ENCODE measurements at regions of chr6 and their contacts with region 1.

Region 1: GRCh38 chr6:33410050-33410710 is 634 bp upstream of the PHF1 start:
- DNase-seq: peak; percentile 98
- ATAC-seq: peak; percentile 74
- H3K4me3 ChIP-seq: peak overlapping the region; percentile 63 to 91 (median 84)
- H3K4me3 Mint-ChIP-seq: peak overlapping the region; percentile 87
- H3K27ac ChIP-seq: peak overlapping the region; percentile 96 to 98
- H3K27ac Mint-ChIP-seq: peak overlapping the region; percentile 94
- H3K4me1 ChIP-seq: peaks cover 37 to 52% of the 10 kb centered on the region in 2 donors
- H3K4me1 Mint-ChIP-seq: peaks cover 47% of the 10 kb centered on the region
- H3K27me3 ChIP-seq: no peaks in the 10 kb centered on the region
- H3K27me3 Mint-ChIP-seq: no peaks in the 10 kb centered on the region
- CTCF ChIP-seq: no peak

Region 2: GRCh38 chr6:31752739-31753319 is 1657.4 kb before region 1 on chr6:
- CTCF ChIA-PET with region 1: no interaction called
- POLR2A ChIA-PET with region 1: no interaction called
- intact Hi-C with region 1: no loop called
- DNase-seq: no peak
- ATAC-seq: no peak
- H3K4me3 ChIP-seq: no peak overlapping the region
- H3K4me3 Mint-ChIP-seq: no peak overlapping the region
- H3K27ac ChIP-seq: no peak overlapping the region
- H3K27ac Mint-ChIP-seq: no peak overlapping the region
- H3K4me1 ChIP-seq: no peaks in the 10 kb centered on the region
- H3K4me1 Mint-ChIP-seq: no peaks in the 10 kb centered on the region
- H3K27me3 ChIP-seq: no peaks in the 10 kb centered on the region
- H3K27me3 Mint-ChIP-seq: no peaks in the 10 kb centered on the region
- CTCF ChIP-seq: no peak

Region 3: GRCh38 chr6:33288921-33289748 is 121.0 kb before region 1 on chr6 and contains the starts of genes PFDN6 and WDR46:
- CTCF ChIA-PET with region 1: no interaction called
- POLR2A ChIA-PET with region 1: no interaction called
- intact Hi-C with region 1: loop called (anchors 1 kb)
- DNase-seq: peak; percentile 93
- ATAC-seq: peak; percentile 96
- H3K4me3 ChIP-seq: peak within 1 kb of the TSS; percentile 78 to 99 (median 86)
- H3K4me3 Mint-ChIP-seq: peak within 1 kb of the TSS; percentile 93
- H3K27ac ChIP-seq: peak within 1 kb of the TSS; percentile 42 to 68
- H3K27ac Mint-ChIP-seq: peak within 1 kb of the TSS; percentile 86
- H3K4me1 ChIP-seq: peaks cover 19 to 25% of the 10 kb centered on the region in 2 donors
- H3K4me1 Mint-ChIP-seq: peaks cover 38% of the 10 kb centered on the region
- H3K27me3 ChIP-seq: no peaks in the 10 kb centered on the region
- H3K27me3 Mint-ChIP-seq: no peaks in the 10 kb centered on the region
- CTCF ChIP-seq: no peak
- total RNA-seq, gene PFDN6: 44.7 and 51.1 TPM in 2 replicates
- total RNA-seq, gene WDR46: 66.4 and 77.2 TPM in 2 replicates

Region 4: DNA sequence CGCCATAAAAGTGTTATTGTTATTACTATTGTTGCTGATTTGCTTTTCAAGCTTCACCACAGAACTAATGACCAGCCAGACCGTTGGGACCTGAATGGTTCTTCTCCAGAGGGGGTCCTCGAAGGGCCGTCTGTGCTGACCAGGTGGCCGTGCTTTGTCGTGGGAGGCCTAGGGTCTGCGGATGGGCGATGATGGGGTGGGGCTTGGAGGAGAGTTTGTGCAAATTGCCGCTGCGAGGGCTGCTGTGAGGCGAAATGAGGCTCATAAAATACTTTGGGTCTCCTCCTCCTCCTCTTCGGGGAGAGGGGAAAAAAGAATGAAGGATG is 86.6 kb before region 1 on chr6:
- CTCF ChIA-PET with region 1: no interaction called
- POLR2A ChIA-PET with region 1: interaction called, 10 read pairs
- intact Hi-C with region 1: loop called (anchors 1 kb)
- DNase-seq: no peak
- ATAC-seq: no peak
- H3K4me3 ChIP-seq: peak overlapping the region; percentile 72 to 93 (median 85)
- H3K4me3 Mint-ChIP-seq: peak overlapping the region; percentile 91
- H3K27ac ChIP-seq: peak overlapping the region; percentile 85 to 95
- H3K27ac Mint-ChIP-seq: peak overlapping the region; percentile 93
- H3K4me1 ChIP-seq: peaks cover 43 to 63% of the 10 kb centered on the region in 2 donors
- H3K4me1 Mint-ChIP-seq: peaks cover 59% of the 10 kb centered on the region
- H3K27me3 ChIP-seq: no peaks in the 10 kb centered on the region
- H3K27me3 Mint-ChIP-seq: no peaks in the 10 kb centered on the region
- CTCF ChIP-seq: no peak

Region 5: DNA sequence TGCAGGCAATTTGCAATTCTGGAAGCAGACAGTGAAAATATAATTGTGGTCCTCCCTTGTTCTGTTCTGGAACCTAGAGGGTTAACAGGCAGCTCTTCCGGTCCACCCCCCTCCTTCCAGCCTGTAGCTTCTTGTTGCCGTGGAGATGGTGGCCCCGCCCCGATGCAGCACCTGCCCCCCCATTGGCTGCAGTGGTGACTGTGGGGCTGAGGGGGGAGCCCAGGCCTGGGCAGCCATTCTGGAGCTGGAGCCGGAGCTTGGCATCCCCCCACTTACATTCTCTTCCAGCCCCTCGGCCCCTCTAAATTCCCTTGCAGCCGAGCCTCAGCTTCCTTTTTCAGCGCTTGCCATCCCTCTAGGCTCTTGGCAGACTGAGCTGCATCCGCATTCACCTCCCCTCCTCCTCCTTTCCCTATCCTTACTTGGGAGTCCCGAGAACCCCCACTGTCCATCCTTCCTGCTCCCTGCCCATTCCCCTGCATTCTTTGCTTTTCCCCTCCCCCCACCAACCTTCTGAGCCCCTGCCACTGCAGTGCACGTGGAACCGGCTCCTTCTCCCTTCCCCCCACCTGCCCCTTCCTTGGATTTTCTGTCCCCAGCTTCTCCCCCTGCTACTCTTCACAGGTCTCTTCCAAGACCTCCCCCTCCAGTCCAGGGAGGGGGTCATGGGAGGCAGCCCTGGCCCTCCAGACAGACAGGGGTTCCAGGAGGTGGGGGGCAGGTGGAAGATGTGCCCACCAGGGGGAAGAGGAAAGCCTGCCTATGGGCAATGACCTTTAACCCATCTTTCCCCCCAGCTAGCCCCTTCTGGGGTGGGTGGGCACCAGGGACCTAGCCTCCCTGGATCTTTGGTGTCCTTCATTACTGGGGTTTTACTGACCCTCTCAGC is 21.1 kb after region 1 on chr6:
- CTCF ChIA-PET with region 1: interaction called, 6 read pairs
- POLR2A ChIA-PET with region 1: interaction called, 11 read pairs
- intact Hi-C with region 1: loop called (anchors 1 kb)
- DNase-seq: peak; percentile 86
- ATAC-seq: peak; percentile 53
- H3K4me3 ChIP-seq: peak overlapping the region; percentile 41 to 72 (median 50)
- H3K4me3 Mint-ChIP-seq: peak overlapping the region; percentile 96
- H3K27ac ChIP-seq: peak overlapping the region; percentile 56 to 75
- H3K27ac Mint-ChIP-seq: peak overlapping the region; percentile 96
- H3K4me1 ChIP-seq: peaks cover 67 to 74% of the 10 kb centered on the region in 2 donors
- H3K4me1 Mint-ChIP-seq: peaks cover 74% of the 10 kb centered on the region
- H3K27me3 ChIP-seq: no peaks in the 10 kb centered on the region
- H3K27me3 Mint-ChIP-seq: no peaks in the 10 kb centered on the region
- CTCF ChIP-seq: no peak

Region 6: GRCh38 chr6:33570806-33571636 is 160.8 kb after region 1 on chr6:
- CTCF ChIA-PET with region 1: no interaction called
- POLR2A ChIA-PET with region 1: interaction called, 10 read pairs
- intact Hi-C with region 1: loop called (anchors 1 kb)
- DNase-seq: peak; percentile 97
- ATAC-seq: peak; percentile 84
- H3K4me3 ChIP-seq: peak overlapping the region; percentile 61 to 99 (median 76)
- H3K4me3 Mint-ChIP-seq: peak overlapping the region; percentile 94
- H3K27ac ChIP-seq: peak overlapping the region; percentile 95 to 100
- H3K27ac Mint-ChIP-seq: peak overlapping the region; percentile 100
- H3K4me1 ChIP-seq: peaks cover 16 to 24% of the 10 kb centered on the region in 2 donors
- H3K4me1 Mint-ChIP-seq: peaks cover 31% of the 10 kb centered on the region
- H3K27me3 ChIP-seq: no peaks in the 10 kb centered on the region
- H3K27me3 Mint-ChIP-seq: no peaks in the 10 kb centered on the region
- CTCF ChIP-seq: no peak

Region 7: DNA sequence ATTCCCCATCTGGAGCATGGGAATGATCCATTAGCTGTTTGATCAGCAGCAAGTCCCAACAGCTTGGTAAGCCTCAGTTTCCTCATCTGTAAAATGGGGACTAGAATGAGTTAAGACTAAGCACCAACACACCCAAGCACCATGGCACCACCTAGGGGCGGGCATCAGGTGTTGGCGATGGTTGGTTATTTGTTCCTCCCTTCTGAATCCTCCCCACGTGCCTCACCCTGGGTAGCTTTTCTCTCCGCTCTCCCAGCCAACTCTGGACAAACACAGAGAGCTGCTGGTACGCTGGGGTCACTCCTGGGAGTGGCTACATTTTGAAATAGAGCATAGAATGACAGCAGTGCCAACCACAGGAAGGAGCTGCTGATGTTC is 197.6 kb after region 1 on chr6:
- CTCF ChIA-PET with region 1: no interaction called
- POLR2A ChIA-PET with region 1: no interaction called
- intact Hi-C with region 1: no loop called
- DNase-seq: peak; percentile 70
- ATAC-seq: peak; percentile 87
- H3K4me3 ChIP-seq: no peak overlapping the region
- H3K4me3 Mint-ChIP-seq: no peak overlapping the region
- H3K27ac ChIP-seq: no peak overlapping the region
- H3K27ac Mint-ChIP-seq: no peak overlapping the region
- H3K4me1 ChIP-seq: peaks cover 7 to 23% of the 10 kb centered on the region in 2 donors
- H3K4me1 Mint-ChIP-seq: peaks cover 30% of the 10 kb centered on the region
- H3K27me3 ChIP-seq: no peaks in the 10 kb centered on the region
- H3K27me3 Mint-ChIP-seq: no peaks in the 10 kb centered on the region
- CTCF ChIP-seq: peak; percentile 74

Measured in B cell (primary cell).